ENCODE measurements at regions of chr12 and their contacts with region 1.

Region 1: GRCh38 chr12:442235-442884 is 17.4 kb upstream of the B4GALNT3 start:
- DNase-seq: peak; percentile 63 to 66
- ATAC-seq: peak; percentile 68 to 85; a peak in 5 of 6 replicates
- H3K4me3 ChIP-seq: no peak overlapping the region
- H3K27ac ChIP-seq: no peak overlapping the region
- H3K4me1 ChIP-seq: no peaks in the 10 kb centered on the region
- CTCF ChIP-seq: peak; percentile 85
- EP300 ChIP-seq: no peak
- POLR2A ChIP-seq: no peak
- RAD21 ChIP-seq: peak; percentile 80 to 83

Region 2: DNA sequence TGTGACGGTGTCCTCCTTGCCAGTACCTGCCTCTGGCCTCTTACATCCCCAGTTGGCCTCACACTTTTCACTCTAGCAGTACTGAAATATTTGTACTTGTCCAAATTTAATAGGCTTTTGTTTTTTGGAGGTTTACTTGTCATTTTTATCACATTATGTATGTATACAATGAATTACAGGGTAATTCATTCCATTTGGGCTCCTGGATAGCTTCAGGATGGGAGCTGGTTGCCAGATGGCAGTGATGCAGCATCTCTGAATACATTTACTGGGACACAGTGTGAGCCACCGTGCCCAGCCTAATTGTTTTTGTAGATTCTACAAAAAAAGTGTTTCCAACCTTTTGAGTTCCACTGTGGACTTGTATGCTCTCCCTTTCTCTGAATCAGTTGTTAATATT is 27.5 kb before region 1 on chr12:
- CTCF ChIA-PET with region 1: interaction called, 15 read pairs
- POLR2A ChIA-PET with region 1: no interaction called
- DNase-seq: no peak
- ATAC-seq: no peak
- H3K4me3 ChIP-seq: no peak overlapping the region
- H3K27ac ChIP-seq: no peak overlapping the region
- H3K4me1 ChIP-seq: no peaks in the 10 kb centered on the region
- CTCF ChIP-seq: no peak
- EP300 ChIP-seq: no peak
- POLR2A ChIP-seq: no peak
- RAD21 ChIP-seq: no peak

Region 3: GRCh38 chr12:452667-453210 is 10.4 kb after region 1 on chr12:
- CTCF ChIA-PET with region 1: interaction called, 48 read pairs
- POLR2A ChIA-PET with region 1: no interaction called
- DNase-seq: no peak
- ATAC-seq: 0 out of 6 replicates have a peak, but pooled peaks of 1 of the 2 experiments have one; percentile 33
- H3K4me3 ChIP-seq: no peak overlapping the region
- H3K27ac ChIP-seq: no peak overlapping the region
- H3K4me1 ChIP-seq: no peaks in the 10 kb centered on the region
- CTCF ChIP-seq: no peak
- EP300 ChIP-seq: no peak
- POLR2A ChIP-seq: no peak
- RAD21 ChIP-seq: no peak; a peak in 2 of 5 replicates

Region 4: GRCh38 chr12:480831-481816 is 38.8 kb after region 1 on chr12:
- CTCF ChIA-PET with region 1: interaction called, 23 read pairs
- POLR2A ChIA-PET with region 1: no interaction called
- DNase-seq: no peak
- ATAC-seq: no peak; a peak in 2 of 6 replicates
- H3K4me3 ChIP-seq: no peak overlapping the region
- H3K27ac ChIP-seq: no peak overlapping the region
- H3K4me1 ChIP-seq: no peaks in the 10 kb centered on the region
- CTCF ChIP-seq: no peak
- EP300 ChIP-seq: no peak
- POLR2A ChIP-seq: no peak
- RAD21 ChIP-seq: no peak

Region 5: DNA sequence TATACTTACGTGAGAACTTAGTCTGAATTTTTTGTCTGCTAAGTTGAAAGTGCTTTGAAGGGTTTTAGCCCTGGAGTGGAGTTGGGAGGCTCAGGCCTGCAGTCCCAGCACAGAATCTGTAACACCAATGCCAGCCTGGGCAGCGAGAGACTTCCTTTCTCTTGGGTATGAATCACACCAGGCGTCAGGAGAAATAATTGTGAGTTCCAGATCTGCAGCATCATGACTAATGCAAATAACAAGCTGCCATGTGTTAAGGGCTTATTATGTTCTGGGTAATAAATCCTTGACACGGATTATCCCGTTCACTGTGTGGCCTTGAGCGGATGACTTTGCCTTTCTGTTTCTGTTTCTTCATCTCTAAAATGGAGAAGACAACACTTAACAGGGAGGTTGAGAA is 87.9 kb after region 1 on chr12:
- CTCF ChIA-PET with region 1: interaction called, 34 read pairs
- POLR2A ChIA-PET with region 1: no interaction called
- DNase-seq: no peak
- ATAC-seq: no peak
- H3K4me3 ChIP-seq: no peak overlapping the region
- H3K27ac ChIP-seq: no peak overlapping the region
- H3K4me1 ChIP-seq: no peaks in the 10 kb centered on the region
- CTCF ChIP-seq: no peak
- EP300 ChIP-seq: no peak
- POLR2A ChIP-seq: no peak
- RAD21 ChIP-seq: no peak

Region 6: GRCh38 chr12:546921-547845 is 104.8 kb after region 1 on chr12:
- CTCF ChIA-PET with region 1: interaction called, 252 read pairs
- POLR2A ChIA-PET with region 1: no interaction called
- DNase-seq: peak; percentile 74 to 78
- ATAC-seq: peak; percentile 77 to 91
- H3K4me3 ChIP-seq: peak overlapping the region; percentile 9; the same call in 1 of the 3 replicates
- H3K27ac ChIP-seq: peak overlapping the region in 1 of 2 experiments; percentile 44; a peak in 1 of 6 replicates
- H3K4me1 ChIP-seq: peaks cover 13% of the 10 kb centered on the region; the same call in 2 of the 3 replicates
- CTCF ChIP-seq: peak; percentile 94
- EP300 ChIP-seq: no peak
- POLR2A ChIP-seq: no peak
- RAD21 ChIP-seq: peak; percentile 97 to 99

Region 7: GRCh38 chr12:569803-570434 is 127.6 kb after region 1 on chr12:
- CTCF ChIA-PET with region 1: interaction called, 12 read pairs
- POLR2A ChIA-PET with region 1: no interaction called
- DNase-seq: peak; percentile 87 to 95
- ATAC-seq: peak; percentile 37 to 69
- H3K4me3 ChIP-seq: peak overlapping the region; percentile 62
- H3K27ac ChIP-seq: peak overlapping the region; percentile 97 to 98
- H3K4me1 ChIP-seq: peaks cover 30% of the 10 kb centered on the region
- CTCF ChIP-seq: peak; percentile 92
- EP300 ChIP-seq: no peak
- POLR2A ChIP-seq: no peak
- RAD21 ChIP-seq: peak; percentile 95 to 98

Measured in A549 (cell line).